WTC11 (cell line): ENCODE measurements at regions of chr12 and their contacts with region 1.

Region 1: DNA sequence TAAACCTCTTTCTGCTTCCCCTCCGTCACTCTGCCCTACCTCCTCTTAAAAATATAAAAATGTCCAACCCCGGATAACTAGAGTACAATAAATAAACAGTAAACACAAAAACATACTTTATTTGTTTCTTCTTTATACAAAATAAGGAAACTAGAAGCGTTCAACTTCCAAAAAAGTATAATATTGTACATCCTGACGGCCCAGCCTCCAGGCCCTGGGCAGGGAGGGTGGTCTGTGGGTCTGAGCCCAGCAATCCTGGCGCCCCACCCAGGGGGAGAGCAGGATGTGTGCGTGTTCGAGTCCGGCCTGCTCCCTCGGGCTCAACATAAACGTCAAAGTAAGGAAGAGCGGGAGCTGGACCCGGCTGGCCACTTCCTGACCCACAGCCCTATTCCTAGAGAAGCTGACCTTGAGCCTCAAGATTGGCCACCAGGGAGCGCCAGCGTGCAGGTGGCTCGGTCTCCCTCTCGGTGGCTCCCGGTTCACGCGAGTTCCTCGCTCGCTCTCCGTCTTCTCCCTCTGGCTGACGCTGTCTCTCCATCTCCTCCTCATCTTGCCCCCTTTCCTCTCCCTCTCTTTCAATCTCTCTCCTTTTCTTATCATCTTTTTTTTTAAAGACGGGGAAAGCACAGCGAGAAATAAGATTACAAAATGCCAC is 9.4 kb downstream of the LHX5 start:
- DNase-seq: peak; percentile 89
- ATAC-seq: peak; percentile 12
- H3K4me3 Mint-ChIP-seq: peak overlapping the region; percentile 75
- H3K27ac Mint-ChIP-seq: no peak overlapping the region
- H3K4me1 Mint-ChIP-seq: peaks cover 35% of the 10 kb centered on the region
- H3K27me3 Mint-ChIP-seq: peaks cover 78% of the 10 kb centered on the region
- CTCF ChIP-seq: peak; percentile 81; the same call in 1 of the 2 replicates

Region 2: GRCh38 chr12:113445544-113446171 is 16.6 kb before region 1 on chr12:
- CTCF ChIA-PET with region 1: interaction called, 24 read pairs
- POLR2A ChIA-PET with region 1: no interaction called
- DNase-seq: no peak
- ATAC-seq: no peak
- H3K4me3 Mint-ChIP-seq: no peak overlapping the region
- H3K27ac Mint-ChIP-seq: no peak overlapping the region
- H3K4me1 Mint-ChIP-seq: no peaks in the 10 kb centered on the region
- H3K27me3 Mint-ChIP-seq: peaks cover 9% of the 10 kb centered on the region
- CTCF ChIP-seq: no peak

Region 3: GRCh38 chr12:113515082-113515856 is 53.0 kb after region 1 on chr12:
- CTCF ChIA-PET with region 1: interaction called, 11 read pairs
- POLR2A ChIA-PET with region 1: no interaction called
- DNase-seq: peak; percentile 50
- ATAC-seq: peak; percentile 74
- H3K4me3 Mint-ChIP-seq: peak overlapping the region; percentile 78
- H3K27ac Mint-ChIP-seq: peak overlapping the region; percentile 30; the same call in 1 of the 2 replicates
- H3K4me1 Mint-ChIP-seq: peaks cover 39% of the 10 kb centered on the region
- H3K27me3 Mint-ChIP-seq: peaks cover 76% of the 10 kb centered on the region
- CTCF ChIP-seq: no peak

Region 4: GRCh38 chr12:113647048-113647447 is 184.8 kb after region 1 on chr12:
- CTCF ChIA-PET with region 1: interaction called, 10 read pairs
- POLR2A ChIA-PET with region 1: no interaction called
- DNase-seq: peak; percentile 64
- ATAC-seq: no peak
- H3K4me3 Mint-ChIP-seq: no peak overlapping the region
- H3K27ac Mint-ChIP-seq: no peak overlapping the region
- H3K4me1 Mint-ChIP-seq: peaks cover 19% of the 10 kb centered on the region
- H3K27me3 Mint-ChIP-seq: peaks cover 11% of the 10 kb centered on the region
- CTCF ChIP-seq: peak; percentile 42; the same call in 1 of the 2 replicates

Region 5: DNA sequence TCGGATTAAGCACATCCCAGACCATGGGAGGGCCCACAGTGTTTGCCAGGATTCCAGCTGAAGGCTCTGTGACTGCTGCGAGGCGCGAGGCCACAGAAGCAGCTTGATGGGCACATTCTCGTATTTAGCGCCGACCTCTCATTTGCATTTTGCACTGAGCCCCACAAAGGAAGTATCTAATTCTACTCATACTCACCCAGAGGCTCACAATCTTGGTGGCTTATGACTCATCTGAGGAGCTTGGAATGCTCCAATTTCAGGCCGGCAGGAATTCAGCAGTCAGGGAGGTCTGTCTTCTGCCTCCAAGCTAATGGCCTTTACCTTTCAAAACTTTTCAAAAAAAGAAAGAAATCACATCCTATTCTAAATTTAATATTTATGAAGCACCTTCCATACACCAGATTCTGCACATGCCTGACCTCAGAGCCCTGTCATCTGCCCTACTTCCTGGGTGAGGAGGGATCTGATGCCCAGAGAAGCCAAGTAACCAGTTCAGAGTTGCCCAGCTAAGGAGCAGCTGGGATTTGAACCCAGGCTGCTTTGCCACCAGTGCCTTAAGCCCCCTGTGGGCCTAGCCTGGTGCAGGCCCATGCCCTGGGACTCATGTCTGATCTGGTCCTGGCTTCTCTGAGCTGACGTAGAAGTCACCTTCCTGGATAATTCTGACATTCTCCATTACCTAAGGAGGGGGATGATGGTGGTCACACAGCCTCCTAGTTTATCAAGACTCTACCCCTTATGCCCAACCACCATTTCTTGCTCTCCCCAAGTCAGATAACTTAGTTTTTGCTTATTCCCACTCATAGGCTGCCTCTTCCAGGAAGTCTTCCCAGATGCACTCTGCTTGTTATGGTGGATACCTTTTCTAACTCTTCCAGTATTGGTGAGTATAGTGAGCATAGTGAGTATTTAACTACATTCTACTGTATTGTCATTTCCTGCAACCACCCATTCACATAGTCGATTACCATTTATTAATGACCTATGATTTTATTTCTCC is 304.9 kb after region 1 on chr12:
- CTCF ChIA-PET with region 1: interaction called, 12 read pairs
- POLR2A ChIA-PET with region 1: no interaction called
- DNase-seq: no peak
- ATAC-seq: peak; percentile 39
- H3K4me3 Mint-ChIP-seq: no peak overlapping the region
- H3K27ac Mint-ChIP-seq: no peak overlapping the region
- H3K4me1 Mint-ChIP-seq: peaks cover 13% of the 10 kb centered on the region
- H3K27me3 Mint-ChIP-seq: no peaks in the 10 kb centered on the region
- CTCF ChIP-seq: no peak

Region 6: DNA sequence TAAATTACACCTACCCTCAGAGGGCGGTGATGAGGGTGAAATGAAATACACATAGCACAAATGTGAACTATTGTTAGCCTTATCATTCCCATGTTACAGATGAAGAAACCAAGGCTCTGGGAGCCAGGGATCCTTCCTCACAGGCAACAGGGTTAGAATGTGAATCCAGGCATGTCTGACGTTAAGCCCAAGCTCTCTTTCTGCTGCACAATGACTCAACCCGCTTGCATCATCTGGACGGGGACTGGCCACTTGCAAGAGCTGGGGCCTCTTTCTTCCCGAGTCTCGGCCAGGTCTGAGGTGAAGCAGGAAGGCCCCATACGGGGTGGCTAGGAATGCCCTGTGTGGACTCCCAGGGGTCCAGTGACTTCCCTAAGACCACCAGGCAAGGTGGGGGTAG is 398.7 kb after region 1 on chr12:
- CTCF ChIA-PET with region 1: interaction called, 16 read pairs
- POLR2A ChIA-PET with region 1: no interaction called
- DNase-seq: no peak
- ATAC-seq: no peak
- H3K4me3 Mint-ChIP-seq: no peak overlapping the region
- H3K27ac Mint-ChIP-seq: peak overlapping the region; percentile 83
- H3K4me1 Mint-ChIP-seq: peaks cover 47% of the 10 kb centered on the region
- H3K27me3 Mint-ChIP-seq: no peaks in the 10 kb centered on the region
- CTCF ChIP-seq: no peak